Activated CD4-positive, alpha-beta T cell treated with anti-CD3 and anti-CD28 coated beads, Interleukin-2, amount 10 ng/mL, durations not matched to agents 24 days and 14 days (primary cell): ENCODE measurements at regions of chr5 and their contacts with region 1.

Region 1: GRCh38 chr5:137665678-137666460 is 70.0 kb downstream of the KLHL3 start:
- DNase-seq: peak; percentile 78
- H3K4me3 Mint-ChIP-seq: no peak overlapping the region
- H3K27ac Mint-ChIP-seq: peak overlapping the region; percentile 49
- H3K4me1 Mint-ChIP-seq: peaks cover 17% of the 10 kb centered on the region
- H3K27me3 Mint-ChIP-seq: no peaks in the 10 kb centered on the region

Region 2: DNA sequence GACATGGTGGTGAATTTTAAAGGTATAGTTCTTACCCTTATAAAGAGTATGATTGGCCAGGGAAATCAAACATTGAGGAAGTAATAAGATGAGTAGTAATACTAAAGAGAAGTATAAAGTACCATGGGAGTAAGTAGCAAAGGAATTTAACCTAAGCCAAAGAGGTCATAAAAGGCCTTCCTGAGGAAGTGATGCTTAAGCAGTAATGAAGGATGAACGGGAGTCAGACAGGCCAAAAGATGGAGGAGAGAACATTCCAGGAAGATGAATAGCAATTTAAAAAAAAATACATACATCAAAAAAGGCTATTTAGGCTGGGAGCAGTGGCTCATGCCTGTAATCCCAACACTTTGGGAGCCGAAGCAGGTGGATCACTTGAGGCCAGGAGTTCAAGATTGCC is 41.0 kb after region 1 on chr5:
- intact Hi-C with region 1: no loop called
- DNase-seq: no peak
- H3K4me3 Mint-ChIP-seq: no peak overlapping the region
- H3K27ac Mint-ChIP-seq: no peak overlapping the region
- H3K4me1 Mint-ChIP-seq: no peaks in the 10 kb centered on the region
- H3K27me3 Mint-ChIP-seq: no peaks in the 10 kb centered on the region

Region 3: DNA sequence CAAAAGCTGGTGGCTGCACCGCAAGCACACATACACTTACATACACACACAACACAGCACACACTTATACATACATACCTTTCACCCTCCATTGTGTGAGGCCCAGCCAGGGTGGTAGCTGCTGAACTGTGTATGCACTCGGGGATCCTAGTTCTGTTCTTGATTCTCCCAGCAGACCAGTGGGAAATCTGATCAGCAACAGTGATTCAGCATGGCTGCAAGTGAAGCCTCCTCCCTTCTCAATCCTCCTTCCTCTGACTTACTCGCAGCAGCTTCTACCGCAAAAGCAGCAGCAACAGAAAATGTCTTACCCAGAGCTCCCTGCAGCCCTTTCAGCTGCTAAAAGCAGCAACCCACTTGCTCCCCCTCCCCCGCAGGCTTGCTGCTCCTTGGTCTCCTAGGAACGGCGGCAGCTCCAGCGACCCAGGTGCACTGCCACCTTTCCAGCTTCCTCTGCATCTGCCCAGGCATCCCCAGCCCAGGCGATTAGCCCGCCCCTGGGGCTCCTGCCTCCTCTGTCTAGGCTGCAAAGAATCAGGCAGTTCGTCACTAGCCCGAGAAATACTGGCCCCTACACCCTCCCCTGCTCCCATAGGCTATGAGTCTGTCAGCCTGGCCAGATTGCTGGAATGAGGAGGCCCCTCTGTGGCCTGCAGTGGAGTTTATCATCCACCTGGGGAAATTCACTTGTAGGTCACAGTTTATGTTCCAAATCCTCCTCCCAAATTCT is 69.9 kb after region 1 on chr5 and contains the start of gene KLHL3:
- intact Hi-C with region 1: loop called (anchors 1 kb)
- DNase-seq: peak; percentile 78
- H3K4me3 Mint-ChIP-seq: no peak within 1 kb of the TSS
- H3K27ac Mint-ChIP-seq: no peak within 1 kb of the TSS
- H3K4me1 Mint-ChIP-seq: peaks cover 6% of the 10 kb centered on the region
- H3K27me3 Mint-ChIP-seq: peaks cover 3% of the 10 kb centered on the region
- total RNA-seq, gene KLHL3: 1.5 and 2.2 TPM in 2 replicates